ENCODE measurements at regions of chr17 and their contacts with region 1.

Region 1: GRCh38 chr17:43576563-43577229 is 30.6 kb upstream of the ETV4 start:
- DNase-seq: peak; percentile 83
- H3K4me3 ChIP-seq: no peak overlapping the region; a peak in 1 of 4 replicates
- H3K27ac ChIP-seq: no peak overlapping the region
- H3K4me1 ChIP-seq: peaks cover 10% of the 10 kb centered on the region in 2 experiments; a peak in 2 of 4 replicates
- H3K27me3 ChIP-seq: no peaks in the 10 kb centered on the region
- CTCF ChIP-seq: peak; percentile 90
- EP300 ChIP-seq: no peak
- RAD21 ChIP-seq: peak; percentile 97

Region 2: DNA sequence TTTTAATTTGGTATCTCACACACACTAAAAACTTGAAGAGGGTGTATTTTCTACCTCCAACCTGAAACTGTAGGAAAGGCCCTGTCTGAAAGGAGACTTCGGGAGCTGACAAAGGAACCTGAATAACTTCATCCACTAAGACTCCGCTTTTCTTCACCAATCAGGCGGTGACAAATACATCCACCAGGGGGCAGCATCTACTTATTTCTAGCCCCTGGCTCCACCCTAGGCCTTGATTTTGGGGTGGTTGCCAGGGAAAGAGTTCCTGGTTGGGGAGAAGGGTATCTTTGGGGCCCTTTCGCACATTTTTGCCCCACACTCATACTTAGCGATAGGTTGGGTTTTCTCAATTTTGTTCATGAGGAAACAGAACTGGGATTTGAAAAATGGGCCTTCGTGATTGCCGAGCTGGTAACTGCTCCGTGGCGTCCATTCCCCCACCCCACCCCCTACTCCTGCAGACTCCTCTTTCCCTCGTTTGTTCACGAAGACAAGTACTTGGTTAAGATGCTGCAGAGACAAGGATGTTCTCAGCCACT is 182.7 kb before region 1 on chr17:
- CTCF ChIA-PET with region 1: interaction called, 13 read pairs
- POLR2A ChIA-PET with region 1: no interaction called
- DNase-seq: peak; percentile 87
- H3K4me3 ChIP-seq: no peak overlapping the region; a peak in 1 of 4 replicates
- H3K27ac ChIP-seq: no peak overlapping the region
- H3K4me1 ChIP-seq: peaks cover 0 to 4% of the 10 kb centered on the region in 2 experiments; a peak in 1 of 4 replicates
- H3K27me3 ChIP-seq: no peaks in the 10 kb centered on the region
- CTCF ChIP-seq: peak; percentile 92
- EP300 ChIP-seq: no peak
- RAD21 ChIP-seq: peak; percentile 98

Region 3: GRCh38 chr17:43406676-43407645 is 169.7 kb before region 1 on chr17:
- CTCF ChIA-PET with region 1: no interaction called
- POLR2A ChIA-PET with region 1: no interaction called
- DNase-seq: no peak
- H3K4me3 ChIP-seq: no peak overlapping the region
- H3K27ac ChIP-seq: peak overlapping the region; percentile 12 to 62; a peak in 3 of 4 replicates
- H3K4me1 ChIP-seq: peaks cover 11 to 14% of the 10 kb centered on the region in 2 experiments
- H3K27me3 ChIP-seq: no peaks in the 10 kb centered on the region
- CTCF ChIP-seq: no peak; the same call in 1 of the 2 replicates
- EP300 ChIP-seq: peak in 1 of 2 experiments; percentile 60; a peak in 1 of 4 replicates
- RAD21 ChIP-seq: no peak

Region 4: DNA sequence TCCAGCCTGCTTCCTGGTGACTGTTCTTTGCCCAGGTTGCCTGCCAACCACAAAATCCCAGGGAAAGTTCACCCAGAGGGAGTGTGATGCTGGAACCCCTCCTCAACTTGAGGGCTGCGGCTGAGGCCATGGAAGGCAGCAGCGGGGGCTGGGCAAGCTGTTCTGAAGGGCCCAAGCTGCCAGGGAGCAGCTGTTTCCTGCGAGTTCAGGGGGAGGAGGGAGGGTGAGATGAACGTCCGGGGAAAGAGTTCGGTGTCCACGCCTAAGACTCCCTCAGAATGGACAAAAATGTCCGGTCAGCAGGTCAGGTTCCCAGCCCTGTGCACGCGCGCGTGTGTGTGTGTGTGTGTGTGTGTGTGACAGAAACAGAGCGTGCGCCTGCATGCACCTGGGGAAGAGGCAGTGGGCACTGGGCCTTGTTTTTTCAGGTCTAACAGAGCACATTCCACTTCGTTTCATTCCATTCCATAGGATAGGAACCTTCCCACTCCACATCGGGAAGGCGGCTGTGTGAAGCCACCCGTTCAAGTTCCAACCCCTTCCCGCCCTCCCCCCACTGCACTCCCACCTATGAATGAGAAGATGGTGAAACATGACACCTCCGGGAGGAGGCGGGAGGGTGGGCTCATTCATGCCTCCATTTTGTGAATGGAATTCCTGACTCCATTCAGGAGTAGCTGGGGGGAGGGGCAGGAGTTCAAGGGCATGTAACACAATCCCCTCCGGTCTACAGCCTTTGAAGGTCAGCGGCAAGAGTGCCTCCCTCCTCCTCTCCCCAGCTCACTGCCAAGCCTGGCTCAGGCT is 46.2 kb before region 1 on chr17:
- CTCF ChIA-PET with region 1: interaction called, 13 read pairs
- POLR2A ChIA-PET with region 1: no interaction called
- DNase-seq: no peak
- H3K4me3 ChIP-seq: peak overlapping the region in 1 of 2 experiments; percentile 13; a peak in 1 of 4 replicates
- H3K27ac ChIP-seq: peak overlapping the region; percentile 88 to 95
- H3K4me1 ChIP-seq: peaks cover 20 to 28% of the 10 kb centered on the region in 2 experiments; a peak in 3 of 4 replicates
- H3K27me3 ChIP-seq: no peaks in the 10 kb centered on the region
- CTCF ChIP-seq: no peak
- EP300 ChIP-seq: no peak
- RAD21 ChIP-seq: no peak

Region 5: GRCh38 chr17:43559161-43559816 is 17.4 kb before region 1 on chr17:
- CTCF ChIA-PET with region 1: interaction called, 14 read pairs
- POLR2A ChIA-PET with region 1: no interaction called
- DNase-seq: no peak
- H3K4me3 ChIP-seq: no peak overlapping the region
- H3K27ac ChIP-seq: no peak overlapping the region
- H3K4me1 ChIP-seq: no peaks in the 10 kb centered on the region
- H3K27me3 ChIP-seq: no peaks in the 10 kb centered on the region
- CTCF ChIP-seq: no peak
- EP300 ChIP-seq: no peak
- RAD21 ChIP-seq: no peak

Region 6: GRCh38 chr17:43616852-43617251 is 40.2 kb after region 1 on chr17:
- CTCF ChIA-PET with region 1: interaction called, 14 read pairs
- POLR2A ChIA-PET with region 1: no interaction called
- DNase-seq: no peak
- H3K4me3 ChIP-seq: no peak overlapping the region
- H3K27ac ChIP-seq: no peak overlapping the region
- H3K4me1 ChIP-seq: no peaks in the 10 kb centered on the region
- H3K27me3 ChIP-seq: no peaks in the 10 kb centered on the region
- CTCF ChIP-seq: no peak
- EP300 ChIP-seq: no peak
- RAD21 ChIP-seq: no peak

Region 7: DNA sequence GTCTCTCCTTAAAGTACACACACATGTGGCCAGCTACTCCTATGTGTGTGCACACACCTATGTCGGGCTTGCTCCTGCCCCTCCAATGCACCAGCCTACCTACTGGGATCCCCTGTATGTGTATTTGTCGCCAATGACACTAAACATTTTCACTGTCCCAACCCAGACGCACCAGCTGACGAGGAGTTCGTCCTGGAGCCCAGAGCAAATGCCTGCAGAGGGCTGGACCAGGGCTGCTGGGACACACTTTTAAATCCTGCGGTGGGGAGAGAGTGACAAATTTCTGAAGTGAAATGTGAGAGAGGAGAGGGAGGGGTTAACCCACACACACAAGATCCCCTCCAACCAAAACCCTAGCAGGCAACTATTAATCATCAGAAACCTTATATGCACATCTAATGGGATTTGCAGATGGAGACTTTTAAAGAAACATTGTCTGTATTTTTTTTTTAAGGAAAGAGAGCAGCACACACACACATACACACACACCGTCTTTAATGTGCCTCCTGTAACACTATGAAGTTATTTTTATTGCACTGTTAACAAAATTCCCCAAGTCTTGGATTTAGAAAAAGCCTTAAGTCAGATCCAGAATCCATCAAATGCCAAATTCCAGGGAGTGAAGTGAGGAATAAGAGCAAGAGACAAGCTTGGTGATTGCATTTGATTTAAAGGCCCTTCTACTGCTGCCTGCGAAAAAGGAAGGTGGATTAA is 85.2 kb after region 1 on chr17 and contains the start of gene MEOX1:
- CTCF ChIA-PET with region 1: interaction called, 17 read pairs
- POLR2A ChIA-PET with region 1: interaction called, 3 read pairs
- DNase-seq: no peak
- H3K4me3 ChIP-seq: no peak within 1 kb of the TSS
- H3K27ac ChIP-seq: no peak within 1 kb of the TSS
- H3K4me1 ChIP-seq: no peaks in the 10 kb centered on the region
- H3K27me3 ChIP-seq: no peaks in the 10 kb centered on the region
- CTCF ChIP-seq: no peak
- EP300 ChIP-seq: no peak
- RAD21 ChIP-seq: no peak
- polyA plus RNA-seq, gene MEOX1: 0.05 TPM in 1 of 2 replicates, not detected in the other

Region 8: GRCh38 chr17:43766413-43767052 is 189.8 kb after region 1 on chr17:
- CTCF ChIA-PET with region 1: interaction called, 97 read pairs
- POLR2A ChIA-PET with region 1: interaction called, 3 read pairs
- DNase-seq: peak; percentile 74
- H3K4me3 ChIP-seq: no peak overlapping the region; a peak in 1 of 4 replicates
- H3K27ac ChIP-seq: no peak overlapping the region
- H3K4me1 ChIP-seq: no peaks in the 10 kb centered on the region
- H3K27me3 ChIP-seq: no peaks in the 10 kb centered on the region
- CTCF ChIP-seq: peak; percentile 97
- EP300 ChIP-seq: no peak
- RAD21 ChIP-seq: peak; percentile 53

Measured in SK-N-SH (cell line).